ENCODE measurements at regions of chr14 and their contacts with region 1.

Region 1: GRCh38 chr14:31207755-31208545 is at the start of gene HECTD1:
- DNase-seq: peak; percentile 88 to 97
- ATAC-seq: peak; percentile 97
- H3K4me3 ChIP-seq: peak within 1 kb of the TSS; percentile 80 to 89
- H3K27ac ChIP-seq: peak within 1 kb of the TSS; percentile 92 to 94
- H3K4me1 ChIP-seq: no peaks in the 10 kb centered on the region
- H3K27me3 ChIP-seq: no peaks in the 10 kb centered on the region
- total RNA-seq, gene HECTD1: 137 to 164 TPM

Region 2: GRCh38 chr14:31166271-31166710 is 41.7 kb before region 1 on chr14:
- intact Hi-C with region 1: loop called (anchors 5 kb)
- DNase-seq: no peak
- ATAC-seq: no peak
- H3K4me3 ChIP-seq: no peak overlapping the region
- H3K27ac ChIP-seq: peak overlapping the region; percentile 16 to 93
- H3K4me1 ChIP-seq: peaks cover 0 to 4% of the 10 kb centered on the region in 2 donors
- H3K27me3 ChIP-seq: no peaks in the 10 kb centered on the region

Region 3: DNA sequence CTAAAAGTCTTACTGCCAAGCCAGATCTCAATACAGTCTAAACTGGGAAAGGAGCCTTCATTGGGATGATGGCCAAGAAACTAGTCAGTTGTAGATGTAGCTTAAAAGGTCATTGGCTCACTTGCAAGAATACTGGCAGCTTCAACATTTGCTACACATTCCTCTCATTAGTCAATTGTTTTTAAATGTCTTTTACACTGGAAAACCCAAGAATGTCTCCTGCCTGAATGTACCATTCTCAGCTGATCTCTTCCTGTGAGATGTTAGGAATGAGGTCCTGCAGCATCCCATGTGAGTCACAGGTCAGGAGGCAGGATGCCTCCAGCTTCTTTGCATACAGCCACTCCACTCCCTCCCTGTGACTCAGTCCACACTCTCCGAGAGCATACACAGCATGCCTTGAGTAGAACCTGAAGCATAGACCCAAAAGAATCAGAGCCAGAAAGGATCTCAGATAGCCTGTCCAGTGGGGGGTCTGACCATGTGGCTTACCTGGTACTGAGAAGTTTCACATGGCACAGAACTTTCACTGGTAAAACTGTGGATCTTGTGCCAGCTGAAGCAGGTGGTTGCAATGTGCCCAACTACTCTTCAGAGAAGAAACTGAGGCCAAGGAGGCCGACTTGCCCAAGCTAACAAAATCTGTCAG is 55.7 kb after region 1 on chr14:
- intact Hi-C with region 1: loop called in 1 of 2 experiments (anchors 10 kb)
- DNase-seq: peak; percentile 76 to 80
- ATAC-seq: peak; percentile 88
- H3K4me3 ChIP-seq: no peak overlapping the region
- H3K27ac ChIP-seq: peak overlapping the region; percentile 44 to 76
- H3K4me1 ChIP-seq: peaks cover 0 to 14% of the 10 kb centered on the region in 2 donors
- H3K27me3 ChIP-seq: no peaks in the 10 kb centered on the region

Region 4: GRCh38 chr14:31326111-31326510 is 118.2 kb after region 1 on chr14:
- intact Hi-C with region 1: no loop called
- DNase-seq: no peak
- ATAC-seq: no peak
- H3K4me3 ChIP-seq: no peak overlapping the region
- H3K27ac ChIP-seq: no peak overlapping the region
- H3K4me1 ChIP-seq: no peaks in the 10 kb centered on the region
- H3K27me3 ChIP-seq: no peaks in the 10 kb centered on the region